ENCODE measurements at regions of chr9 and their contacts with region 1.

Region 1: GRCh38 chr9:134443168-134444037 is 117.1 kb downstream of the RXRA start:
- DNase-seq: peak; percentile 94
- CTCF ChIP-seq: peak; percentile 99

Region 2: GRCh38 chr9:134171316-134172197 is 271.8 kb before region 1 on chr9:
- CTCF ChIA-PET with region 1: interaction called, 44 read pairs
- POLR2A ChIA-PET with region 1: no interaction called
- DNase-seq: no peak
- CTCF ChIP-seq: no peak

Region 3: GRCh38 chr9:134178768-134179551 is 264.4 kb before region 1 on chr9:
- CTCF ChIA-PET with region 1: interaction called, 16 read pairs
- POLR2A ChIA-PET with region 1: no interaction called
- DNase-seq: no peak
- CTCF ChIP-seq: no peak

Region 4: DNA sequence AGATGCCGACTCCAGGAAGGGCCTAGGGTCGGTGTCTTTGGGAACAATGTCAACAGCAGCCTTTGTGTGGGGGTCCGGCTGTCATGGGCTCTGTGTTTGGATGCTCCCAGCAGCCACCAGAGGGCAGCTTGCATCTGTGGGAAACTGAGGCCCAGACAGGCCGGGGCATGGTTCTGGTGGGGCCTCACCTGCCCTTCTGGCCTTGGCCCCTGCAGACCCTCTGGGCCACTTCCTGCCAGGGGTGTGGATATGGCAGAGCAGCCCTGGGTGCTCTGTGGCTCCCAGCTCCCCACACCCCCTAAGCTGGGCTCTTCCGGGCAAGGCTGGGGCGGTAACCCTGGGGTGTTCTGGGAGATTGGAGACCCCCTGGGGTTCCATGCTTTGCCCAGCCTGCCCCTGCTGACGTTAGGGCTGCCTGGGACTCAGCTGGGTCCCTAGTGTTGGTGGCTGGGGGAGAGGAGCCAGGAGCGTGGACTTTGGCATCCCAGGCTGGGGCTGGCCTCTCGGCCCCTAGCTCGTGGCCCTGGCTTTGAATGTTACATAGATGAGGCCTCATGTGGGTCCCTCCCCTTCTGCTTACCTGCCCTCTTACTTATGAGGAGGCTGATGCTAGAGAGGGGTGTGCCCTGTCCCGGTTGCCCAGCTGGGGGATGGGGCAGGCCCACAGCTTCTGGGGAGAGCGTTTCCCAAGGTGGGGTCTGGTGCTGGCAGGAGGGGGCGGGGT is 78.8 kb before region 1 on chr9:
- CTCF ChIA-PET with region 1: interaction called, 11 read pairs
- POLR2A ChIA-PET with region 1: no interaction called
- DNase-seq: no peak
- CTCF ChIP-seq: peak; percentile 27

Region 5: DNA sequence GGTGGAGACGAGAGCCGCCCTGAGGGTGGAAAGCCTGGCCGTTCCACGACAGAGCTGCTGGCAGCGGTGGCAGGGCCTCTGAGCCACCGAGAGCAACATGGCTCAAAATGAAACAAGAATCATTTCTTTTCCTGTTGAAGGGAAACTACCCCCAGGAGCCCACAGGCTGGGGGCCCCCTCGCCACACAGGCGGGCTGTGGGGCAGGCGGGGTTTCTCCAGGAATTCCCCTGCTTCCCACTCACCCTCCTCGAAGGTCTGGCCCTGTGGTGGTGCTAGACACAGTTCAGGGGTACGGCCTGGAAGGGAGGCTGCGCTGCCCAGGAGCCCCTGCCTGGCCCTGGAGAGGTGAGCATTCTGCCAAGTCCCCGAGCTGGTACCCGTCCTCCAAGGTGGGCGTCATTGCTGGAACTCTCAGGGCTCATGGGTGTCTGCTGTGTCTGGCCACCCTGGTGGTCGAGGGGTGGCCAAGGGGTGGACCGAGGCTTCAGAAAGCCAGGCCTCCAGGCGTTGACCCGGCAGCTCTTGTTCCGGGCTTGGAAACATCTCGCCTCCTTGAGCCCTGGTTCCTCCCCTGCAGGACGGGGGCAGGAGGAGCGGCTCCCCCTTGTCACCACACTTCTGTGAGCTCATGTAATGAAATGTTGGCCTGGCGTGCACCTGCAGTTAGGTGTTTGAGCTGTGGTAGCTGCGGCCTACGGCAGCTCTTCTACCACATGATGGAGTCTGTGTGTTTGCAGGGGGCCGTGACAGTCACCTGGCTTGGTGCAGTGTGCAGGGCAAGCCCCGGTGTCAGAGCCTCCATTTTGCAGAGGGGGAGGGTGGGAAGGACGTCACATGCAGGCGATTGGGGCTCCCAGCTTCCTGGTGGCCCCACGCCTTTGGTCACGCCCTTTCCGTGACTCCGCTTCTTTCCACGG is 51.8 kb before region 1 on chr9:
- CTCF ChIA-PET with region 1: interaction called, 17 read pairs
- POLR2A ChIA-PET with region 1: no interaction called
- DNase-seq: peak; percentile 86
- CTCF ChIP-seq: peak; percentile 7

Region 6: GRCh38 chr9:134433101-134433500 is 10.3 kb before region 1 on chr9:
- CTCF ChIA-PET with region 1: interaction called, 34 read pairs
- POLR2A ChIA-PET with region 1: no interaction called
- DNase-seq: no peak
- CTCF ChIP-seq: no peak

Region 7: DNA sequence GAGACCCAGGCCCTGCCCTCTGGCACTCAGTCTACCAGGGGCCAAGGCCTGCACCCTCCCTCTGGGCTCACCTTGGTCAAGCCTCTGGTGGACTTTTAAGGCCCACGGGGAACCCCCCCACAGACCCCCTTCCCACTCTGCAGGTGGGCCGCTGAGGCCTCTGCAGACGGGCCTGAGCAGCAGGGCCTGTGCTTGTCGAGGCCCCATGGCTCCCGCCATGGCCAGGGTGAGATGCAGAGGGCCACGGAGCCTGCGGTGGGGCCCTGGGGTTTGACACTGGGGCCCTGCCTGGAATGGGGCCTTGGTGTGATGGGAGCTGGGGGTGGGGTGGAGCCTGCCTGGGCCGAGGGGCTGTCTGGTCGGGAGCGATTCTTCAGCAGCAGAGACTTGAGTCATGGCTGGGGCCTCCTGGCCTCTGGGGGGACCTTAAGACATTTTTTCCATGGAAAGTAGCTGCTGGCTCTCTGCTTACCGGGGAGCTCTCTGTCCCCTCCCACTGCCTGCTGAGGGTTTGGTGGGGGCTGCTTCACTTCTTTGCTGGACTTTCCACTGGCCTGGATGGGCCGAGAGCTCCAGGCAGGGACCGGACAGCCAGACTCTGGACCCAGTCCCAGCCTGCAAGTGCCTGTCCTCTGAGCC is 14.9 kb after region 1 on chr9:
- CTCF ChIA-PET with region 1: interaction called, 14 read pairs
- POLR2A ChIA-PET with region 1: no interaction called
- DNase-seq: no peak
- CTCF ChIP-seq: no peak

Region 8: DNA sequence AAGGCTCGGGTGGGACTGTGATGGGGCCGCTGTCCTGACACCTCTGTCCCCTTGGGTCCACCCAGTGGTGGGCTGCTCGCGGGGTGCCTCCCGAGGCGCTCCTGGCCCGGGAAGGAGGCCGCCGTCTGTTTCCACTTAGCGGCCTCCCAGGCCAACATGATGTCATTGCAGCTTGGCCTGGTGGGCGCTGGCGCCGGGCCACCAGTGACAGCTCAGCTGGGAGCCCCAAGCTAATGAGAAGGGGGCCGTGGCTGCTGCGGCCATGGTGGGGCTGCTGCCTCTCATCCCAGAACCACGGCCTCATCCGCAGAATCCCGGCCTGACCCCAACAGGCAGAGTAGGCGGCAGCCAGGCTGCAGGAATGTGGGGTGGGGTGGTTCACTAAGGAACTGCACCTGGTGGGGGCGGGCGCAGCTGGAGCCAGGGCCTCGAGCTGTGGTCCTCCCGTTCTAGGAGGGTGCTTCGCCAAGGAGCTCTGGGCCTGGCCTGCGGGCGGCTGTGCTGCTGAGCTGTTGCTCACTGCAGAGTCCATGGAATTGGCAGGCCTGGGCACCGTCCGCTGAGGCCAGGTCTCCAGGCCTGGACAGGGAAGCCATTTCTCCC is 74.7 kb after region 1 on chr9:
- CTCF ChIA-PET with region 1: no interaction called
- POLR2A ChIA-PET with region 1: no interaction called
- DNase-seq: no peak
- CTCF ChIP-seq: no peak